CD14-positive monocyte (primary cell): ENCODE measurements at regions of chr17 and their contacts with region 1.

Region 1: DNA sequence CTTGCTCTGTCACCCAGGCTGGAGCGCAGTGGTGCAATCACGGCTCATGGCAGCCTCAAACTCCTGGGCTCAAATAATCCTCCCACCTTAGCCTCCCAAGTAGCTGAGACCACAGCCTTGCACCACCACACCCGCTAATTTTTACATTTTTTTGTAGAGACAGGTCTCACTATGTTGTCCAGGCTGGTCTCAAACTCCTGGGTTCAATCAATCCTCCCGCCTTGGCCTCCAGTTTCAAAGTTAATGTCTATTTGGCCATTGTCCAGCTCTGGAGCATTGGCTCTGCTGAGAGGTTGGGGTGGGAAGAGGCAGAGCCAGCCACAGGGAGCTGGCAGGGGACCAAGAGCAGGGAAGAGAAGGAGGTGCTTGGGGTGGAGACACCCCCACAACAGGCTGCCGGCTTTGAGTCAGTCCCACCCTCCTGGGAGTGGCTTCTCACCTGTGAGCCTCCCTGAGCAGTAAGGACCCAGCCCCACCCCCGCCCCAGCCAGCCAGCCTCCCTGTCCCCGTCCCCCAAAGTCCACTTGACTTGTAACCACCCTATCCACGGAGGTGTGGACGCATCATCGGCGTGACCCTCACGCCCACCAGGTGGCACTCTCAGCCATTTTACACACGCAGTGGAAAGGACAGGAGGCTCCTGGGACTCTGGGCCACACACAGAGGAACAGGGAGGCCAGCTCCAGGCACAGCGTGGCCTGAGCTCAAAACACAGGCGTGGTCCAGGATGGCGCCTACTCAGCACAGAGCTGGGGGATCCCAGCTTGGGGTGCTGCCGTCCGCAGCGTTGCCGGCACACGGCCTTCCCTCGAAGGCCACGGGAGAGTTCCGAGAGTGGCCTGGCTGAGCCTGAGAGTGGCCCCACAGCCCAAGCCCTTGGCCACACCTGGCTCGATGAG is 22.8 kb upstream of the PVALEF start:
- DNase-seq: peak; percentile 82 to 84 (median 83)
- H3K4me3 ChIP-seq: no peak overlapping the region
- H3K4me3 Mint-ChIP-seq: peak overlapping the region in 1 of 2 donors; percentile 11
- H3K27ac ChIP-seq: no peak overlapping the region
- H3K27ac Mint-ChIP-seq: peak overlapping the region in 1 of 7 donors; percentile 46
- H3K4me1 ChIP-seq: peaks cover 4 to 18% of the 10 kb centered on the region in 2 donors
- H3K4me1 Mint-ChIP-seq: peaks cover 17% of the 10 kb centered on the region
- H3K27me3 ChIP-seq: no peaks in the 10 kb centered on the region
- H3K27me3 Mint-ChIP-seq: peaks cover 1 to 4% (median 2%) of the 10 kb centered on the region in 3 donors
- CTCF ChIP-seq: peak; percentile 76

Region 2: DNA sequence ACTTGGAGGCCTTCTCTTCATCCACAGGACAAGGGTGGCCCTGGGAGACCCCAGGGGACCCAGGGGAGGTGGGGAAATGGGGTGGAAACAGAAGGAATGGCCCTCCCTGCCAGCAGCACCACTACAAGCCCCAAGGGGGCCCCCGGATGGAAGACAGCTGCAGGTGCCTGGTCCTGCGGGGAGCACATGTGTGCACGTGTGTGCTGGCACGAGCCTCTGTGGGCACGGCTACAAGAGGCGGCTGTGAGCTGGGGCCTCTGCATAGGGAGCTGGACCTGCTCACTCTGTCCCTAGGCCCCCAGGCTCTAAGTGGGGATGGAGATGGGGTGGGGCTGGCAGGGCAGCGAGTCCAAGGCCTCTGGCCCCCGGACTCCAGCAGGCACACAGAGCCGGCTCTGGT is 36.7 kb after region 1 on chr17:
- intact Hi-C with region 1: no loop called
- DNase-seq: no peak
- H3K4me3 ChIP-seq: no peak overlapping the region
- H3K4me3 Mint-ChIP-seq: no peak overlapping the region
- H3K27ac ChIP-seq: no peak overlapping the region
- H3K27ac Mint-ChIP-seq: no peak overlapping the region
- H3K4me1 ChIP-seq: no peaks in the 10 kb centered on the region
- H3K4me1 Mint-ChIP-seq: no peaks in the 10 kb centered on the region
- H3K27me3 ChIP-seq: peaks cover 0 to 10% of the 10 kb centered on the region in 2 donors
- H3K27me3 Mint-ChIP-seq: peaks cover 9 to 15% (median 9%) of the 10 kb centered on the region in 3 donors
- CTCF ChIP-seq: no peak

Region 3: DNA sequence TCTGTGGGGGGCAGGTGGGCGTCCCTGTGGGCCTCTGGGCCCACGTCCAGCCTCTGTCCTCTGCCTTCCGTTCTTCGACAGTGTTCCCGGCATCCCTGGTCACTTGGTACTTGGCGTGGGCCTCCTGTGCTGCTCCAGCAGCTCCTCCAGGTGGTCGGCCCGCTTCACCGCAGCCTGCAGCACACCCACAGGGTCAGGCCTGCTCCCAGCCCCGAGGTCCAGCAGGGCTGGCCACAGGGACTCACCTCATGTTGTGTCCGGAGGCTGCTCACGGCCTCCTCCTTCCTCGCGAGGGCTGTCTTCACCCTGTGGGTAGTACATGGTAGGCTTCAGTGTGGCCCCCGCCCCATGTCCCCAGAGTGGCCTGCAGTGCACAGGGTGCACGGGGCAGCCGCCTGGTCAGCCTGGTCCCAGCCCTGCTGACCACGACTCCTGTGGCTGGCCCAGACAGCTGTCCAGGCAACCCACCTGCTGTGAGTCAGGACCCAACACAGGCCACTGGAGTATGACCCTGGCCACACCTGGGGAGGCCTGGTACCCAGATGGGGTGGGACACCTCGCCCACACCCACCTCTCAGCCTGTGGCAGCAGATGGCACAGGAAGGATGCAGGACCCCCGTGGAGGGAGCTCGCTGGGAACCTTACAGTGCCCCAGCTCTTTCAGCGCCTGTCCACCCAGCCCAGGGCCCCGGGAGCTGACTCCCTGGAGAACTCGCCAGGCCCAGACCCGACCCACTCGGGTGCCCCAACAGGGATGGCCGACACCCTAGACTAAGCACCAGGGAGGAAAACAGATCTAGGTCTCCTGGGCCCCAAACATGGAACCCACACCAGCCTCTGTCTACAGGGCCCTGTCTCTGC is 47.4 kb after region 1 on chr17:
- intact Hi-C with region 1: loop called in 1 of 2 experiments (anchors 5 kb)
- DNase-seq: peak; percentile 18 to 30 (median 25)
- H3K4me3 ChIP-seq: no peak overlapping the region
- H3K4me3 Mint-ChIP-seq: no peak overlapping the region
- H3K27ac ChIP-seq: no peak overlapping the region
- H3K27ac Mint-ChIP-seq: no peak overlapping the region
- H3K4me1 ChIP-seq: no peaks in the 10 kb centered on the region
- H3K4me1 Mint-ChIP-seq: peaks cover 2% of the 10 kb centered on the region
- H3K27me3 ChIP-seq: peaks cover 0 to 4% of the 10 kb centered on the region in 2 donors
- H3K27me3 Mint-ChIP-seq: peaks cover 3 to 9% (median 4%) of the 10 kb centered on the region in 3 donors
- CTCF ChIP-seq: peak; percentile 16

Region 4: GRCh38 chr17:81200695-81201580 is 58.4 kb after region 1 on chr17:
- intact Hi-C with region 1: loop called (anchors 1 to 2 kb)
- DNase-seq: peak; percentile 70 to 82 (median 75)
- H3K4me3 ChIP-seq: no peak overlapping the region
- H3K4me3 Mint-ChIP-seq: peak overlapping the region in 1 of 2 donors; percentile 48
- H3K27ac ChIP-seq: no peak overlapping the region
- H3K27ac Mint-ChIP-seq: no peak overlapping the region
- H3K4me1 ChIP-seq: peaks cover 2 to 4% of the 10 kb centered on the region in 2 donors
- H3K4me1 Mint-ChIP-seq: peaks cover 2% of the 10 kb centered on the region
- H3K27me3 ChIP-seq: no peaks in the 10 kb centered on the region
- H3K27me3 Mint-ChIP-seq: no peaks in the 10 kb centered on the region
- CTCF ChIP-seq: peak; percentile 83

Region 5: DNA sequence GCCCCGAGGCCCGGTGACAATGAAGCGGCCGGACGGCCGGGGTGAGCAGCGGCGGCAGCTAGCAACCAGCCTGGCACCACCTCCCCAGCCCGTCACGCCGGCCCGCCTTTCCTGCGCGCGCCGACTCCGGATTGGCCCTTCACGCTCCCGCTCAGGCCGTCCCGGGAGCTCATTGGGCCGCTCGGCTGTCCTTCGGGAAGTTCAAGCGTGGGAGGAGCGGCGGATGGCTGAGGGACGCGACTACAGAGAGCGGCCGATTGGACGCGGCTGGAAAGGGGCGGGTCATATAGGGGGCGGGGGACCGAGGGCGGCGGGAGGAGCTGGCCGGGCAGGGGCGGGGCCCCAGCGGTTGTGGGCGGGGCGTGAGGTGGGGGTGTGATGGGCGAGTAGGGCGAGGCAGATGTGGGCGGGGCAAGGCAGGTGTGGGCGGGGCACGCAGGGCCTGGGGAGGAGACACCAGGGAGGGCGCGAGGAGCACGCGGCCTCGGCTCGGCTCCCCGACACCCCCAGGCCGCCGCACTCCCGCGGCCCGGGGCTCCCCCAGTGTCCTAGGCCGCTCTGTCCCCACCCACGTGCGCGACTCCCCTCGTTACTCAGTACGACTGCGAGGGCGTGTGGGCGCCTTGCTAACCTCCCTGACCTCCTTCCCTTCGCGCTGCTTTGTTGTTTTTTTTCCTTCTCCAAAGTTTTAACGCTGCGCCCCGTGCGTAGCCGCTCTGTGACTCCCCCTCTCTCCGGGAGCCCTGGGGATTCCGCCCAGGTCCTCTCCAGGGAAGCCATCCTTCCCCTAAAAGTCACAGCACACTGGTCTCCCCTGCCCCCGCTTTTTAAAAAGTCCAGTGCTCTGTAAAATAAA is 80.6 kb after region 1 on chr17 and contains the start of gene CEP131:
- intact Hi-C with region 1: loop called in 1 of 2 experiments (anchors 5 kb)
- DNase-seq: peak; percentile 97 to 98 (median 98)
- H3K4me3 ChIP-seq: peak within 1 kb of the TSS; percentile 43 to 86 (median 48)
- H3K4me3 Mint-ChIP-seq: peak within 1 kb of the TSS; percentile 78 to 92
- H3K27ac ChIP-seq: peak within 1 kb of the TSS; percentile 30 to 76
- H3K27ac Mint-ChIP-seq: peak within 1 kb of the TSS; percentile 70 to 91 (median 86)
- H3K4me1 ChIP-seq: peaks cover 31 to 42% of the 10 kb centered on the region in 2 donors
- H3K4me1 Mint-ChIP-seq: peaks cover 32% of the 10 kb centered on the region
- H3K27me3 ChIP-seq: no peaks in the 10 kb centered on the region
- H3K27me3 Mint-ChIP-seq: peaks cover 0 to 4% (median 0%) of the 10 kb centered on the region in 3 donors
- CTCF ChIP-seq: no peak
- polyA plus RNA-seq, gene CEP131: 0.69 to 9.7 (median 1.0) TPM

Region 6: DNA sequence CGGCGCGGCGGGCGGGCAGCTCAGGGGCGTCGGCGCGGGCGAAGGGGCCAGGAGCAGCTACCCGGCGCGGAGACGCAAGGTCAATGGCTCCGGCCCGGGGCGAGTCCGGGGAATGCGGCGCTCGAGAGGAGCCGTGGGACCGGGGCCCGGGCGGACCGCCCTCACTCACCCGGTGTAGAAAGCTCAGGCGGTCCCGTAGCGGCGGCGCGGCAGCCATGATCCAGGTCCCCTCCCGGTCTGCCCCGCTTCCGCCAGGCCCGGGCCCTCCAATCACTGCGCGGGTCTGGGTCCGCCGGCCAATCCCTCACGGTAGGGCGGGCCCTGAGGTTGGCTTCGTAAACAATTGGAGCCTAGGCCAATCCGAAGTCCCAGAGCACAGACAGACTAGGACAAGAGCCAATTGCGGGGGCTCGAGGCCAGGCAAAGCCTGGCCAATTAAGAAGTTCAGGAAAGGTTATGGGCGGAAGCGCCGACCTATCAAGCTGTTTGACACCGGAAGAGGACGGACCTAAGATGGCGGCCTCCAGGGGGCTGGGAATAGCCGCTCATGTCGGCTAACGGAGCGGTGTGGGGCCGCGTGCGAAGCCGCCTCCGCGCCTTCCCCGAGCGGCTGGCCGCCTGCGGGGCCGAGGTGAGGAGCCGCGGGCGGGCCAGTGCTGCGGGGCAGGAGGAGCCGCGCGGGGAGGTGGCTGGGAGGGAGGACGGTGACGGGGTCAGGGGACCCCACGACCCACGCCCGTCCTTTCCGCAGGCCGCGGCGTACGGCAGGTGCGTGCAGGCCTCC is 96.5 kb after region 1 on chr17 and contains the starts of genes NDUFAF8 and TEPSIN:
- intact Hi-C with region 1: loop called (anchors 1 to 2 kb)
- DNase-seq: peak; percentile 98 to 100 (median 99)
- H3K4me3 ChIP-seq: peak within 1 kb of the TSS; percentile 69 to 99 (median 70)
- H3K4me3 Mint-ChIP-seq: peak within 1 kb of the TSS; percentile 86 to 94
- H3K27ac ChIP-seq: peak within 1 kb of the TSS in 1 of 2 donors; percentile 82
- H3K27ac Mint-ChIP-seq: peak within 1 kb of the TSS; percentile 29 to 92 (median 88)
- H3K4me1 ChIP-seq: peaks cover 21 to 36% of the 10 kb centered on the region in 2 donors
- H3K4me1 Mint-ChIP-seq: peaks cover 43% of the 10 kb centered on the region
- H3K27me3 ChIP-seq: no peaks in the 10 kb centered on the region
- H3K27me3 Mint-ChIP-seq: no peaks in the 10 kb centered on the region
- CTCF ChIP-seq: no peak
- polyA plus RNA-seq, gene NDUFAF8: 27.0 to 61.3 (median 41.0) TPM
- polyA plus RNA-seq, gene TEPSIN: 3.4 to 136 (median 4.5) TPM

Region 7: DNA sequence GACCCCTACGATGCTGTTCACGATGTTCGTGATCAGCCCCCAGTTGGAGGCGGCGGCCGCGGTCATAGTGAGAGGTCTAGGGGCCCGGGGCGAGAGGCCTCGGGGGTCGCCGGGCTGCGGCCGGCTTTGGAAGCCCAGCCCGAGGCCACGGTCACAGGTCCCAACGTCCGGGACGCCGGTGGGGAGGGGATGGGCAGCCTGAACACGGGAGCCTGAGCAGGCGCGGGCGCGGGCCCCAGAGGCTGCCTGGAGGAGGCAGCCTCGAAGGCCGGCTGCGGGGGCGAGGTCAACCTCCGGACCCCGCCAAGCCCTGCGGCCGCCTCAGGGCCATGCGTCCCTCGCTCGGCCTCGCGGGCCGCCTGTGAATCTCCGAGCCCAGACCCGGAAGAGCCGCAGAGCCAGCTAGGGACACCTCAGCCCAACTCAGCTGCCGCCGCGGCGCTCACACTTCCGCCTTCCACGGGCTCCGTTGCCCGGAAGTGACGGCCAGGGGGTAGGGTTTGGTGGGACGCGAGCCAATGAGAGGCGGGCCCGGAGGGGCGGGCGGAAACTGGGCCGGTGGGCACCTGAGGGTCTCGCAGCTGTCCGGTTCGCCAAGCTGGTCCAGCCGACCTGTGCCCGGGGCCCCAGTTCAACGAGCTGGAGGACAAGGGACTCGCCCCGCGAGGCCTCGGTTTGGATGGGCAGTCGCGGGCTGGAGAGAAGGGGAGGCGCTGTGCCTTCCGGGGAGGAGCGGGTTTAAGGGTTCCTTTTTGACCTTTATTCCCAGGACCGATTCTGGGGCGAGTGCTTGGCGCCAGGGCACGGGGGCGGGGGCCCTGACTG is 152.5 kb after region 1 on chr17 and contains the start of gene SLC38A10:
- intact Hi-C with region 1: no loop called
- DNase-seq: peak; percentile 92 to 93 (median 92)
- H3K4me3 ChIP-seq: peak within 1 kb of the TSS; percentile 64 to 95 (median 81)
- H3K4me3 Mint-ChIP-seq: peak within 1 kb of the TSS; percentile 93 to 96
- H3K27ac ChIP-seq: peak within 1 kb of the TSS; percentile 79 to 95
- H3K27ac Mint-ChIP-seq: peak within 1 kb of the TSS; percentile 97 to 99 (median 98)
- H3K4me1 ChIP-seq: peaks cover 54 to 59% of the 10 kb centered on the region in 2 donors
- H3K4me1 Mint-ChIP-seq: peaks cover 49% of the 10 kb centered on the region
- H3K27me3 ChIP-seq: no peaks in the 10 kb centered on the region
- H3K27me3 Mint-ChIP-seq: peaks cover 2 to 3% (median 2%) of the 10 kb centered on the region in 3 donors
- CTCF ChIP-seq: no peak
- polyA plus RNA-seq, gene SLC38A10: 50.8 to 76.1 (median 68.4) TPM